Naive thymus-derived CD8-positive, alpha-beta T cell (primary cell): ENCODE measurements at regions of chr9 and their contacts with region 1.

Region 1: DNA sequence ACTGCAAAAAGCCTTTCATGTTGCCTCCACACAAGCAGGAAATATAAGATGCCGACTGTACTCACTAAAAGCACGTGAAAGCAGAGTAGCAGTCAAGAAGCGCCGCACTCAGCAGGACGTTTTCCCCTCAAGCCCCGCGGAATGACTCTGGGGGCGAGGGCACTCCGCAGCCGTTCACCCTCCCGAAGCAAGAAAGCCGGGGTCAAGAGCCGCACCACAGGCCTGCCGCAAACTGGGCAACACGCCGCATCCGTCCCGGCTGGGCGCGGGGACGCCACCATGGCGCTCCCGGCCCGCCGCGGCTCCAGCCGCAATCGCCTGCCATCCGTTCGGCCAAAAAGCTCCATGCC is 364 bp downstream of the RPS6 start:
- DNase-seq: peak in 4 of 10 donors; percentile 41 to 71 (median 44)
- ATAC-seq: peak; percentile 53 to 57
- H3K4me3 Mint-ChIP-seq: peak overlapping the region; percentile 93 to 99 (median 97)
- H3K27ac Mint-ChIP-seq: peak overlapping the region; percentile 97 to 99 (median 99)
- H3K4me1 Mint-ChIP-seq: peaks cover 23 to 56% (median 41%) of the 10 kb centered on the region in 4 donors
- H3K27me3 Mint-ChIP-seq: no peaks in the 10 kb centered on the region

Region 2: DNA sequence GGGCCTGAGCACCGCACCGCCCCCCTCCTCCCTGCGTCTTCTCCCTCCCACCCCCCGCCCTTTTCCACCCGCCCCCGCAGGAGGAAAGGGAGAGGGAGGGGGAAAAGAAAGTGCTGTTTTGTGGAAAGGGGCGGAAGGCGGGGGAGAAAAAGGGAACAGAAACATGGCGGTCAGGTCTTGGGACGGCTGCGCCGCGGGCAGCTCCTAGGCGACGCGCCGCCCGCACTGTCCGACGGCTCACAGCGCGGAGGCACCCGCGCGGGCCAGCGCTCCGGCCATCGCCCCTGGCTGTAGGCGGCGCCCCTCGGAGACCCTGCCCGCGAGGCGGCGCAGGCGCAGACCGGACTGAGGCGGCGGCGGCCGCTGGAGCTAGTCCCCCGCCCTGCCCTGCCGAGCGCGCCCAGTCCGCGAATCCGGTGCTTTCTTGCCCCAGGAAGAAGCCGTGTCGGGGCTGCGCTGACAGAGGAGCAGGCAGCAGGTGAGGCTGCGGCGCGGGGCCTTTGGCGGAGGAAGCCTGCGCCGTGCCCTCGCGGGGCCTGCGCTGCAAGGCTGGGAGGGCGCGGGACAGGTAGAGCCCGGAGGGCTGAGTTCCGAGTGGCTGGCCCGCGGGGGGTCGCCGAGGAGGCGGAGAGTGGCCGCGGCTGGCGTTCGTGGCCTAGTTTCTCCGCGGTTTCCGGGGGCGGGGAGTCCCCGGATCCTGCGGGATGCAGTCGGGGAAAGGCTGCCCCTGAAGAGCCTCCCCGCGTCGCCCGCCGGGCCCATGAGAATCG is 149.1 kb before region 1 on chr9 and contains the start of gene DENND4C:
- POLR2A ChIA-PET with region 1: interaction called, 18 read pairs
- DNase-seq: peak; percentile 69 to 90 (median 81)
- ATAC-seq: peak; percentile 84 to 86
- H3K4me3 Mint-ChIP-seq: peak within 1 kb of the TSS in 6 of 10 donors; percentile 77 to 89 (median 84)
- H3K27ac Mint-ChIP-seq: peak within 1 kb of the TSS in 9 of 10 donors; percentile 64 to 94 (median 91)
- H3K4me1 Mint-ChIP-seq: peaks cover 2 to 24% (median 19%) of the 10 kb centered on the region in 4 donors
- H3K27me3 Mint-ChIP-seq: no peaks in the 10 kb centered on the region
- polyA plus RNA-seq, gene DENND4C: 31.0 to 40.2 (median 35.1) TPM

Region 3: DNA sequence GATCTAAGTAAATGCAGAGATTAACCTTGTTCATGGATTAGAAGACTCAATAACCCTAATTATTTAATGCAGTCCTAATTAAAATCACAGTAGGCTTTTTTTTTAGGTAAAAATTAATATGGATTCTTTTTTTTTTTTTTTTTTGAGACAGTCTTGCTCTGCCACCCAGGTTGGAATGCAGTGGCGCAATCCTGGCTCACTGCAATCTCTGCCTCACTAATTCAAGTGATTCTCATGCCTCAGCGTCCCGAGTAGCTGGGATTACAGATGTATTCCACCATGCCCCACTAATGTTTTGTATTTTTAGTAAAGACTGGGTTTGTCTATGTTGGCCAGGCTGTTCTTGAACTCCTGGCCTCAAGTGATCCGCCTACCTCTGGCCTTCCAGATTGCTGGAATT is 108.6 kb before region 1 on chr9:
- POLR2A ChIA-PET with region 1: no interaction called
- DNase-seq: no peak
- ATAC-seq: no peak
- H3K4me3 Mint-ChIP-seq: no peak overlapping the region
- H3K27ac Mint-ChIP-seq: no peak overlapping the region
- H3K4me1 Mint-ChIP-seq: peaks cover 18 to 55% (median 48%) of the 10 kb centered on the region in 4 donors
- H3K27me3 Mint-ChIP-seq: no peaks in the 10 kb centered on the region

Region 4: DNA sequence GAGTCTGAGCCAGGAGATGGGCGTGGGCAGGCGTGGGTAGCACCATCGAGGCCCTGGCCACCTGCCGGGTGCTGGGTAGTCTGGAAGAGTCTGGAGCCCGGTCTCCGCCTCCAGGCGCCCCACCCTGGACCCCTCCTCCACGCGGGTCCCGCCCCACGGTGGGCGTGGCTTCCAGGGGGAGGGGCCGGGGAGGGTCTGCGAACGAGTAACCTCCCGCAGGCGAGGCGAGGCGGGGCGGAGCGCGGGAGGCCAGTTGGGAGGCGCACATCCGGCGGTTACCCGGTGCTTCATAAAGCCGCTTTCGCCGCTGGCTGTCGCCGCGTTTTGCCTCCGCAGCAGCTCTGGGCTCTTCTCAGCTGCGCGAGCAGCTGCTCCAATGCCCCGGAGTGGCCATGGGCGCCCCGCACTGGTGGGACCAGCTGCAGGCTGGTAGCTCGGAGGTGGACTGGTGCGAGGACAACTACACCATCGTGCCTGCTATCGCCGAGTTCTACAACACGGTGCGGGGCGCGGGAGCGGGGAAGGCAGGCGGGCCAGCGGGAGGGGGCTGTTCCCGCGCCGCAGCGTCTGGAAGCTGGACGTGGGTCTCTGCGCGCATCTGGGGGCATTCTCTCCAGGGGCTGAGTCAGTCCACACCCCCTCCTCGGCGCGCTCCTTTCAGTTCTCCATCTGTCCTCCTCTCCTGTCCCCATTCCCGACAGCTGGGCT is 29.2 kb after region 1 on chr9 and contains the start of gene ACER2:
- POLR2A ChIA-PET with region 1: interaction called, 32 read pairs
- DNase-seq: peak; percentile 91 to 97 (median 95)
- ATAC-seq: peak; percentile 89 to 94
- H3K4me3 Mint-ChIP-seq: peak within 1 kb of the TSS; percentile 90 to 96 (median 94)
- H3K27ac Mint-ChIP-seq: peak within 1 kb of the TSS in 9 of 10 donors; percentile 71 to 91 (median 84)
- H3K4me1 Mint-ChIP-seq: peaks cover 9 to 23% (median 16%) of the 10 kb centered on the region in 4 donors
- H3K27me3 Mint-ChIP-seq: no peaks in the 10 kb centered on the region
- polyA plus RNA-seq, gene ACER2: 0.51 to 1.2 (median 0.80) TPM